ENCODE measurements at regions of chr1 and their contacts with region 1.

Region 1: GRCh38 chr1:11037740-11038182 is 9.3 kb downstream of the MASP2 start:
- DNase-seq: peak; percentile 92
- ATAC-seq: peak; percentile 97
- H3K4me3 Mint-ChIP-seq: no peak overlapping the region
- H3K27ac Mint-ChIP-seq: no peak overlapping the region
- H3K4me1 Mint-ChIP-seq: peaks cover 9% of the 10 kb centered on the region
- H3K27me3 Mint-ChIP-seq: peaks cover 5% of the 10 kb centered on the region

Region 2: GRCh38 chr1:10867138-10867721 is 170.5 kb before region 1 on chr1:
- CTCF ChIA-PET with region 1: no interaction called
- DNase-seq: peak; percentile 58
- ATAC-seq: peak; percentile 85
- H3K4me3 Mint-ChIP-seq: peak overlapping the region; percentile 17
- H3K27ac Mint-ChIP-seq: no peak overlapping the region
- H3K4me1 Mint-ChIP-seq: peaks cover 10% of the 10 kb centered on the region
- H3K27me3 Mint-ChIP-seq: peaks cover 67% of the 10 kb centered on the region

Region 3: GRCh38 chr1:10975567-10976326 is 62.0 kb before region 1 on chr1:
- CTCF ChIA-PET with region 1: no interaction called
- DNase-seq: no peak
- ATAC-seq: no peak
- H3K4me3 Mint-ChIP-seq: no peak overlapping the region
- H3K27ac Mint-ChIP-seq: no peak overlapping the region
- H3K4me1 Mint-ChIP-seq: no peaks in the 10 kb centered on the region
- H3K27me3 Mint-ChIP-seq: peaks cover 19% of the 10 kb centered on the region

Region 4: DNA sequence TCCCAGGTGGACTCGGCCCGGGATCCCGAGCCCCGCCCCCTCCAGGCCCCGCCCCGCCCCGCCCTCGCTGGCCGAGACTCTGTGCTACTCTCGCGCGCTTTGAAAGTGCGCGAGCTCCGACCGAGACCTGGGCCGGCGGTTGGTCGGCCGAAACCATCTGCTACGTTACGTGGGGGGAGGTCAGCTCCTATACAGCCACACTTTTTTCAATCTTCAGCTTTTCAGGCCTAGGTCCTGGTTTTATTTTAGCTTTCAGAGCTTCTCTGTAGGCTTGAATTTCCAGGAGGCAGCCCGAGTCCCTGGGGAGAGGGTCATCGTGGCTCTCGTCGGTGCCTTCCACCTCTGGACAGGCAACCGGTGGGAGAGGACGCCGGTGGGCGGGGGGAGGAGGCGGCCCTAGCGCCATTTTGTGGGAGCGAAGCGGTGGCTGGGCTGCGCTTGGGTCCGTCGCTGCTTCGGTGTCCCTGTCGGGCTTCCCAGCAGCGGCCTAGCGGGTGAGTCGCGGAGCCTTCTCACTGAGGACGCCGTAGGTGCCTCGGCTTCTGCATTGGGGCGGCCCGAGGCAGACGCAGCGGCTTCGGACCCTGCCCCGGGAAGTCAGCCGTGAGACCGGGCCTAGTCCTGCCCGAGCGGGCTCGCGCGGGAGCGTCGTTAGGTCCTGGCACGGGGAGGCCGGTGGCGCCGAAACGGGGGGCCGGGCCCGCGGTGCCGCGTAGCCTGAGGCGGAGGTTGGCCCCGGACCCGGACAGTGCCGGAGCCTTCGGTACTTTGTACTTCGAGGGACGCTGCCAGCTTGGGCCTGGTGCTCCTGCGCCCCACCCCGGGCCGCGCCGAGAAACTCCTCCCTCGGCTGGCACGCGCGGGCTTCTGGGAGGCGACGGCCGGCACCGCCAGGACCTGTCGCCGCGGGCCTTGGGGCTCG is 25.2 kb before region 1 on chr1 and contains the start of gene TARDBP:
- CTCF ChIA-PET with region 1: interaction called, 15 read pairs
- DNase-seq: peak; percentile 93
- ATAC-seq: peak; percentile 89
- H3K4me3 Mint-ChIP-seq: peak within 1 kb of the TSS; percentile 92
- H3K27ac Mint-ChIP-seq: peak within 1 kb of the TSS; percentile 98
- H3K4me1 Mint-ChIP-seq: peaks cover 28% of the 10 kb centered on the region
- H3K27me3 Mint-ChIP-seq: no peaks in the 10 kb centered on the region
- total RNA-seq, gene TARDBP: 175 to 184 TPM

Region 5: GRCh38 chr1:11059990-11060830 is 22.4 kb after region 1 on chr1 and contains the start of gene SRM:
- CTCF ChIA-PET with region 1: interaction called, 75 read pairs
- DNase-seq: peak; percentile 92
- ATAC-seq: peak; percentile 94
- H3K4me3 Mint-ChIP-seq: peak within 1 kb of the TSS; percentile 90
- H3K27ac Mint-ChIP-seq: peak within 1 kb of the TSS; percentile 93
- H3K4me1 Mint-ChIP-seq: peaks cover 61% of the 10 kb centered on the region
- H3K27me3 Mint-ChIP-seq: no peaks in the 10 kb centered on the region
- total RNA-seq, gene SRM: 136 to 150 TPM

Region 6: GRCh38 chr1:11099310-11100149 is 61.8 kb after region 1 on chr1 and contains the start of gene EXOSC10:
- CTCF ChIA-PET with region 1: interaction called, 23 read pairs
- DNase-seq: peak; percentile 96
- ATAC-seq: peak; percentile 98
- H3K4me3 Mint-ChIP-seq: peak within 1 kb of the TSS; percentile 95
- H3K27ac Mint-ChIP-seq: peak within 1 kb of the TSS; percentile 91
- H3K4me1 Mint-ChIP-seq: peaks cover 18% of the 10 kb centered on the region
- H3K27me3 Mint-ChIP-seq: no peaks in the 10 kb centered on the region
- total RNA-seq, gene EXOSC10: 103 to 104 TPM

Region 7: DNA sequence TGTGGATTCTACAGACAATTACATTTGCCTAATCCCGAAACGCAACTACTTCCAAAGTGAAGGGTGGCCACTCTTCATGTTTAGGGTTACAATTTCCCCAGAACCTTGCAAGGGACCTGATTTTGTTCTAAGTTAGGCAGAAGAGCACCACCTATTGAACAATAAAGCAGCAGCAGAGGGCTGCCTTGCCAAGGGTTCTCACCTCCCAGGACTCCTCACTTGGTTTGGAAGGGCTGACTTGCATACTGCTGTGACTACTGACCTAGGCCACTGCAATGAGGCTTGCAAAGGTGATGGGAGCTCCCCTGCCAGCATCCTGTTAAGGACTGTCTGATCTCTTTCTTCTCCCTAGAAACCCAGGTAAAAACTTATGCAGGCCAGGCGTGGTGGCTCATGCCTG is 210.4 kb after region 1 on chr1:
- CTCF ChIA-PET with region 1: interaction called, 30 read pairs
- DNase-seq: no peak
- ATAC-seq: no peak
- H3K4me3 Mint-ChIP-seq: no peak overlapping the region
- H3K27ac Mint-ChIP-seq: no peak overlapping the region
- H3K4me1 Mint-ChIP-seq: peaks cover 3% of the 10 kb centered on the region
- H3K27me3 Mint-ChIP-seq: no peaks in the 10 kb centered on the region

Region 8: DNA sequence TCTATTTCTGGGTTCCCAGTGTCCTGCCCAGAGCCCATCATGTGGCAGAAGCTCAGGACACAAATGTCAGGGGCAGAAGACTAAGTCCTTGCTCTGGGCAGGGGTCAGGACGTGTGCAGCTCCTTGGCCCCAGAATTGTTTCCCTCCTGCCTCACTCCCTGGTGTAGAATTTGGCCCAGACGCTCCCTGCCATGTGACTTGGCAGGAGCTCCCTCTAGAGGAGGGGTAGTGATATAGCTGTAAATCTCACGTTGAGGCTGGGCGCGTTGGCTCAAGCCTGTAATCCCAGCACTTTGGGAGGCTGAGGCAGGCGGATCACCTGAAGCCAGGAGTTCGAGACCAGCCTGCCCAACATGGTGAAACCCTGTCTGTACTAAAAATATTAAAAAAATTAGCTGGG is 326.4 kb after region 1 on chr1:
- CTCF ChIA-PET with region 1: interaction called, 12 read pairs
- DNase-seq: no peak
- ATAC-seq: peak; percentile 39
- H3K4me3 Mint-ChIP-seq: no peak overlapping the region
- H3K27ac Mint-ChIP-seq: no peak overlapping the region
- H3K4me1 Mint-ChIP-seq: no peaks in the 10 kb centered on the region
- H3K27me3 Mint-ChIP-seq: peaks cover 6% of the 10 kb centered on the region

Measured in activated CD8-positive, alpha-beta memory T cell treated with anti-CD3 and anti-CD28 coated beads, Interleukin-2, amount 10 ng/mL, durations not matched to agents 7 days and 5 days (primary cell).